ENCODE measurements at regions of chr11 and their contacts with region 1.

Region 1: DNA sequence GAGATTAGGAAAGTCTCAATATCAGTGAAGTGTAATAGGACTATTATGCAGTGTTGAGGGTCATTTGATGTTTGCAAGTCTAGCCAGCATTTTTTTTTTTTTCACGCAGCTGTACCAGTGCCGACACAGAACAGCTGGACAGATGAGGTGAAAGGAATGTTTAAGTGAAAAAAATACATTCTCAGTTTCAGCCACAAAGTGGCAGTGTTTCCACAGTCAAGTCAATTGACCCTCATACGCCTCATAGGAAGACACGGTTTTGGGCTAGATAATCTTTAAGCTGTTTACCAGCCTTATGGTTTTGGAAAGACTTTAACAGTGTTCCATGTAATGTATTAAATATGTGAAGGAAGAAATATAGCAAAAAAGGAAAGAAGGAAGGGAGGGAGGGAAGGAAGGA is 349.9 kb upstream of the ANO3 start:
- DNase-seq: peak; percentile 20
- CTCF ChIP-seq: peak; percentile 46

Region 2: GRCh38 chr11:25943777-25944661 is 38.0 kb before region 1 on chr11:
- CTCF ChIA-PET with region 1: no interaction called
- POLR2A ChIA-PET with region 1: no interaction called
- DNase-seq: no peak
- CTCF ChIP-seq: no peak

Region 3: GRCh38 chr11:25970726-25971508 is 11.1 kb before region 1 on chr11:
- CTCF ChIA-PET with region 1: interaction called, 25 read pairs
- POLR2A ChIA-PET with region 1: no interaction called
- DNase-seq: no peak
- CTCF ChIP-seq: peak; percentile 7

Region 4: GRCh38 chr11:26134481-26135355 is 152.7 kb after region 1 on chr11:
- CTCF ChIA-PET with region 1: interaction called, 55 read pairs
- POLR2A ChIA-PET with region 1: no interaction called
- DNase-seq: no peak
- CTCF ChIP-seq: peak; percentile 48

Region 5: GRCh38 chr11:26227296-26227695 is 245.3 kb after region 1 on chr11:
- CTCF ChIA-PET with region 1: interaction called, 18 read pairs
- POLR2A ChIA-PET with region 1: no interaction called
- DNase-seq: peak; percentile 24
- CTCF ChIP-seq: peak; percentile 49

Region 6: GRCh38 chr11:26283852-26284408 is 301.9 kb after region 1 on chr11:
- CTCF ChIA-PET with region 1: interaction called, 17 read pairs
- POLR2A ChIA-PET with region 1: no interaction called
- DNase-seq: no peak
- CTCF ChIP-seq: no peak